ENCODE measurements at regions of chr11 and their contacts with region 1.

Region 1: GRCh38 chr11:17063171-17064002 is 14.1 kb downstream of the RPS13 start:
- DNase-seq: peak; percentile 27
- ATAC-seq: peak; percentile 95
- H3K4me3 ChIP-seq: no peak overlapping the region
- H3K27ac ChIP-seq: no peak overlapping the region
- H3K4me1 ChIP-seq: no peaks in the 10 kb centered on the region
- H3K27me3 ChIP-seq: no peaks in the 10 kb centered on the region
- CTCF ChIP-seq: peak; percentile 68
- POLR2A ChIP-seq: no peak
- RAD21 ChIP-seq: peak; percentile 83

Region 2: GRCh38 chr11:16785520-16786128 is 277.8 kb before region 1 on chr11:
- CTCF ChIA-PET with region 1: interaction called, 12 read pairs
- POLR2A ChIA-PET with region 1: no interaction called
- dilution Hi-C with region 1: no loop called
- in situ Hi-C with region 1: loop called (anchors 10 kb)
- intact Hi-C with region 1: loop called (anchors 1 kb)
- DNase-seq: peak; percentile 75
- ATAC-seq: peak; percentile 95
- H3K4me3 ChIP-seq: no peak overlapping the region
- H3K27ac ChIP-seq: no peak overlapping the region
- H3K4me1 ChIP-seq: no peaks in the 10 kb centered on the region
- H3K27me3 ChIP-seq: no peaks in the 10 kb centered on the region; the same call in 1 of the 2 replicates
- CTCF ChIP-seq: peak; percentile 85
- POLR2A ChIP-seq: no peak
- RAD21 ChIP-seq: peak; percentile 79

Region 3: GRCh38 chr11:16820324-16821092 is 242.9 kb before region 1 on chr11:
- CTCF ChIA-PET with region 1: interaction called, 10 read pairs
- POLR2A ChIA-PET with region 1: no interaction called
- dilution Hi-C with region 1: no loop called
- in situ Hi-C with region 1: no loop called
- intact Hi-C with region 1: loop called (anchors 1 kb)
- DNase-seq: peak; percentile 61
- ATAC-seq: peak; percentile 89
- H3K4me3 ChIP-seq: no peak overlapping the region
- H3K27ac ChIP-seq: no peak overlapping the region
- H3K4me1 ChIP-seq: no peaks in the 10 kb centered on the region
- H3K27me3 ChIP-seq: peaks cover 29% of the 10 kb centered on the region
- CTCF ChIP-seq: peak; percentile 79
- POLR2A ChIP-seq: no peak
- RAD21 ChIP-seq: peak; percentile 63

Region 4: DNA sequence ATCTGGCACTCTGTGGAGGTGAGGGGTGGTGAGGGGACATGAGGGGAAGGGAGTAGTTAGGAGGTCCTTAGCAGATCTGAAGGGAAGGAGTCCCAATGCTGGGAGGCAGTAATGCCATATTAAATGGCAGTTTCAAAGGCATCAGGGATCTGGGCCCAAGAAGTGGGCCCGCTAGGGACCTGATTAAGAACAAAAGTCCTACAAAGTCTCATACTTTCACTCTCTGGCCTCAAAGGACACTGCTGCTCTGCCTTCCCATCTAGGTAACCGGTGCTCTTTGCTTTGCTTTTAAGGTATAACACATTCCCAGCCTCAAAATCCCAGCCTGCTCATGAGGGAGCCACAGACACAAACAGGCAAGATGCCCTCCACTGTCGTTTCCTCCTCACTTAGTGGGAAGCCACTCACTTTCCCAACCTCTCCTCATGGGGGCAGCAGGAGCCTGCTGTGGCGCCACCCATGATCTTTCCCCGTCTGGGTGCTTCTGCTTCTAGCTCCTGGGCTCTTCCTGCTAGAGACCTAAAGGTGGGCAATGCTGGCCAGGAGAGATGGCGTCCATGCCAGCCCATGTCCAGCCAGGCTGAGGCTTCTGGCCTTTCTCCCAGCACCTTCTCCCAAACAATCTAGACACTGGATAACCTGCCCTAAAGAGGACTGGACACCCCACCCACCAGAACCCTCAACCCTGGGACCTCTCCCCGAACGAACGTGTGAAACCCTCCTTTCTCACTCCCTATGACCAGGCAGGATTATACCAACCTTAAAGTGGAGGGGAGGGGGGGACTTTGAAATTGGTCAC is 117.5 kb before region 1 on chr11:
- CTCF ChIA-PET with region 1: interaction called, 5 read pairs
- POLR2A ChIA-PET with region 1: no interaction called
- dilution Hi-C with region 1: no loop called
- in situ Hi-C with region 1: loop called (anchors 10 kb)
- intact Hi-C with region 1: loop called (anchors 1 kb)
- DNase-seq: peak; percentile 34
- ATAC-seq: peak; percentile 93
- H3K4me3 ChIP-seq: no peak overlapping the region
- H3K27ac ChIP-seq: no peak overlapping the region
- H3K4me1 ChIP-seq: no peaks in the 10 kb centered on the region
- H3K27me3 ChIP-seq: peaks cover 6% of the 10 kb centered on the region; the same call in 1 of the 2 replicates
- CTCF ChIP-seq: peak; percentile 57
- POLR2A ChIP-seq: no peak
- RAD21 ChIP-seq: peak; percentile 71

Region 5: GRCh38 chr11:17014838-17015626 is 48.4 kb before region 1 on chr11:
- CTCF ChIA-PET with region 1: no interaction called
- POLR2A ChIA-PET with region 1: interaction called, 4 read pairs
- dilution Hi-C with region 1: no loop called
- in situ Hi-C with region 1: no loop called
- intact Hi-C with region 1: loop called (anchors 10 kb)
- DNase-seq: no peak
- ATAC-seq: no peak; the same call in 1 of the 2 replicates
- H3K4me3 ChIP-seq: no peak overlapping the region
- H3K27ac ChIP-seq: no peak overlapping the region
- H3K4me1 ChIP-seq: no peaks in the 10 kb centered on the region
- H3K27me3 ChIP-seq: peaks cover 48% of the 10 kb centered on the region
- CTCF ChIP-seq: 0 out of 2 replicates have a peak, but pooled peaks have one; percentile 9
- POLR2A ChIP-seq: no peak
- RAD21 ChIP-seq: no peak